Right cardiac atrium (tissue), 5 donors: ENCODE measurements at regions of chr1 and their contacts with region 1.

Region 1: DNA sequence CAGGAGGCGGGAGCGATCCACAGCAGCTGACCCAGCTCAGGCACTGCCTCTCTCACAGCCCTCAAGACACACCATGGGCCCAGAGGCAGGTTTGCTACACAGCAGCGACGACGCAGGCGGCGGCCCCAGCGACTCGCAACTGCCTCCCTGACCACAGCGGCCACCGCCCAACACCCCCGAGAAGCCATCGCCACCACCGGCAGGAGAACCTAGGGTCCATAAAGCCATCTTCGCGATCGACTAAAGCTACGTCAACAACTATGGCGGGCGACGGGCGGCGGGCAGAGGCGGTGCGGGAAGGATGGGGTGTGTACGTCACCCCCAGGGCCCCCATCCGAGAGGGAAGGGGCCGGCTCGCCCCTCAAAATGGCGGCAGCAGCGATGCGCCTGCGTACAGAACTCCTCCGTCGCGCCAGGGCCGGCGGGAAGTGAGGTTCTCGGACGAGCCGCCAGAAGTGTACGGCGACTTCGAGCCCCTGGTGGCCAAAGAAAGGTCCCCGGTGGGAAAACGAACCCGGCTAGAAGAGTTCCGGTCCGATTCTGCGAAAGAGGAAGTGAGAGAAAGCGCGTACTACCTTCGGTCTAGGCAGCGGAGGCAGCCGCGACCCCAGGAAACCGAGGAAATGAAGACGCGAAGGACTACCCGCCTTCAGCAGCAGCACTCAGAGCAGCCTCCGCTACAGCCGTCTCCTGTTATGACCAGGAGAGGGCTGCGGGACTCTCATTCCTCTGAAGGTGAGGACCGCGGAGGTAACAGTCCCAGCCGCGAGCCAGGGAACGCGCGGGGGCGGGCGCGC is at the start of gene TOR1AIP1:
- DNase-seq: peak; percentile 98 to 99 (median 99)
- ATAC-seq: peak; percentile 96 to 97
- H3K4me3 ChIP-seq: peak within 1 kb of the TSS; percentile 64
- H3K27ac ChIP-seq: peak within 1 kb of the TSS; percentile 97
- H3K4me1 ChIP-seq: no peaks in the 10 kb centered on the region
- H3K27me3 ChIP-seq: no peaks in the 10 kb centered on the region
- total RNA-seq, gene TOR1AIP1: 59.8 to 65.9 (median 65.4) TPM

Region 2: GRCh38 chr1:179677898-179678297 is 204.5 kb before region 1 on chr1:
- intact Hi-C with region 1: no loop called
- DNase-seq: peak in 1 of 3 donors; percentile 30
- ATAC-seq: no peak
- H3K4me3 ChIP-seq: no peak overlapping the region
- H3K27ac ChIP-seq: no peak overlapping the region
- H3K4me1 ChIP-seq: no peaks in the 10 kb centered on the region
- H3K27me3 ChIP-seq: no peaks in the 10 kb centered on the region

Region 3: DNA sequence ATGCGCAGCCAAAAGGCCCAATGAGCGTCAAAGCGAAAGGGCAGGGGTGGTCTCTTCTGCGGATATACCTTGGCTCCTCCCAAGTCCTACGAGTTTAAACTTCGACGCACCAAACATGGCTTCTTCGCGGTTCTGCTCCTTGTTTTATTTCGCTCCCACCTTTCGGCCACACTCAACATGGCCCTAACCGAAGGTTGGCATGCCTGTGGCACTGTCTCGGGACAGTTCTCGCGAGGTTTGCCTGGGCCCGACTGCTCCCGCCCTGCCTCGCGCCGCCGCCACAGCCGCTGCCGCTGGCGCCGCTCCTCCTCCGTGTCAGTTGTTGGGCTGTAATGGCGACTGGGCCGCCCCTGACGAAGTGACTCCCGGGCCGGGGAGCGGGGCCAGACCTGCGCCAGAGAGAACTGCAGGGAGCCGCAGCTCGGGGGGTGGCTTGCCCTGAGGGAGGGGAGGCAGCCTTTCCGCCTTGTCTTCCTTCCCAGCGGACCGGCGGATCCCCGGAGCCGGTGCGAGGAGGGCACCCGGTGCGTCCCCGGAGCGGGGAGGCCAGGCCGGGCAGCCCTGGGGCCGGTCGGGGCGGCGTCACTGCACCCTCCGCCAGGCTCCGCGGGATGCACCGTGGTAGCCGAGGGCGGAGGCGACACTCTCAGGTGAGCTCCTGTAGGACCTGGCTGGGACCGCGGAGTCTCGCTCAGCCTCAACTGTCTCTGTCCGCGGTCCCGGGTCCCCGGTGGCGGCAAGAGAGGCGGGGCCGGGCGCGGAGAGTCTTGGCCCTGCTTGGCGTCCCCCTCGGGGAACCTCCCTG is 72.3 kb after region 1 on chr1 and contains the start of gene CEP350:
- intact Hi-C with region 1: loop called in 1 of 4 experiments (anchors 10 kb)
- DNase-seq: peak; percentile 98 to 99 (median 99)
- ATAC-seq: peak; percentile 99
- H3K4me3 ChIP-seq: peak within 1 kb of the TSS; percentile 53
- H3K27ac ChIP-seq: peak within 1 kb of the TSS; percentile 90
- H3K4me1 ChIP-seq: peaks cover 2% of the 10 kb centered on the region
- H3K27me3 ChIP-seq: no peaks in the 10 kb centered on the region
- total RNA-seq, gene CEP350: 34.3 to 40.3 (median 36.1) TPM